ENCODE measurements at regions of chr10 and their contacts with region 1.

Region 1: GRCh38 chr10:97278491-97278989 is 13.9 kb downstream of the ARHGAP19 start:
- DNase-seq: no peak
- ATAC-seq: peak; percentile 85 to 98 (median 92)
- H3K4me3 ChIP-seq: peak overlapping the region in 1 of 10 donors; percentile 2
- H3K27ac ChIP-seq: peak overlapping the region in 6 of 10 donors; percentile 31 to 72 (median 48)
- H3K4me1 ChIP-seq: peaks cover 0 to 25% (median 20%) of the 10 kb centered on the region in 9 donors
- H3K27me3 ChIP-seq: no peaks in the 10 kb centered on the region
- CTCF ChIP-seq: peak; percentile 56 to 84 (median 71)

Region 2: DNA sequence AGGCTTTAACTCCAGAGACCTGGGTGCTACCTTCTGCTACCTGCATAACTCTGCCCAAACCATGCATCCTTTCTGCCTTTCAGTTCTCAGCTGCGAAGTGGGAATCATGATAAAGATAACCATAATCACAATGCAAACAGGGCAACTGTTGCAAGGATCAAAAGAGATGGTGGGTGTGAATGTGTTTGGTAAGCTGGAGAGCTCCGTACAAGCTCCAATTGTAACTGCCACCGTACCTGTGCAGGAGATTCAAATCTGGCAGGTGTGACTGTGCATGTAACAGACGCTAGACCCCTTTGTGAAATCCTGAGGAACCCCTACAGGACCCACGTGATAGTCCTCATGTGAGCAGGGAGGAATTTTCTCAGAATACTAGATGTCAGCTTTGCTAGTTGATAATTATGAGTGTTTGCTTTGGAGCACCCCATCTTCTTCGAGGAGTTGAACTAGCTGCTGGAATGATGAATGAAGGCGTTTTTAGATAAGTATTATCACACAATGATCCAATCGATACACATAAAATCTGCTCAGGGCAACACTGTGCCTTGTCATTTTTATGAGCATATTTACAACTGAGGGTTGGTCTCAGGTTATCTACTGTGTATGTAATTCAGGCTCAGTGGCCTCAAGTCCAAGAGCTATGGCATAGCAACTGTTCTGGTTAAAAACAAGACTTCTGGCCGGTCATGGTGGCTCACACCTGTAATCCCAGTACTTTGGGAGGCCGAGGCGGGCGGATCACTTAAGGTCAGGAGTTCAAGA is 71.4 kb after region 1 on chr10:
- intact Hi-C with region 1: loop called in 4 of 10 experiments (anchors 2 to 10 kb)
- DNase-seq: no peak
- ATAC-seq: no peak
- H3K4me3 ChIP-seq: no peak overlapping the region
- H3K27ac ChIP-seq: no peak overlapping the region
- H3K4me1 ChIP-seq: peaks cover 0 to 15% (median 0%) of the 10 kb centered on the region in 9 donors
- H3K27me3 ChIP-seq: no peaks in the 10 kb centered on the region
- CTCF ChIP-seq: no peak

Region 3: GRCh38 chr10:97355571-97355975 is 77.0 kb after region 1 on chr10:
- intact Hi-C with region 1: loop called in 3 of 10 experiments (anchors 2 to 5 kb)
- DNase-seq: peak in 1 of 2 donors; percentile 43
- ATAC-seq: peak; percentile 35 to 85 (median 68)
- H3K4me3 ChIP-seq: peak overlapping the region in 1 of 10 donors; percentile 2
- H3K27ac ChIP-seq: peak overlapping the region in 6 of 10 donors; percentile 6 to 72 (median 58)
- H3K4me1 ChIP-seq: peaks cover 0 to 37% (median 15%) of the 10 kb centered on the region in 9 donors
- H3K27me3 ChIP-seq: no peaks in the 10 kb centered on the region
- CTCF ChIP-seq: peak in 8 of 9 donors; percentile 26 to 65 (median 45)

Measured in heart right ventricle (tissue), 16 donors.